IMR-90 (cell line): ENCODE measurements at regions of chr22 and their contacts with region 1.

Region 1: DNA sequence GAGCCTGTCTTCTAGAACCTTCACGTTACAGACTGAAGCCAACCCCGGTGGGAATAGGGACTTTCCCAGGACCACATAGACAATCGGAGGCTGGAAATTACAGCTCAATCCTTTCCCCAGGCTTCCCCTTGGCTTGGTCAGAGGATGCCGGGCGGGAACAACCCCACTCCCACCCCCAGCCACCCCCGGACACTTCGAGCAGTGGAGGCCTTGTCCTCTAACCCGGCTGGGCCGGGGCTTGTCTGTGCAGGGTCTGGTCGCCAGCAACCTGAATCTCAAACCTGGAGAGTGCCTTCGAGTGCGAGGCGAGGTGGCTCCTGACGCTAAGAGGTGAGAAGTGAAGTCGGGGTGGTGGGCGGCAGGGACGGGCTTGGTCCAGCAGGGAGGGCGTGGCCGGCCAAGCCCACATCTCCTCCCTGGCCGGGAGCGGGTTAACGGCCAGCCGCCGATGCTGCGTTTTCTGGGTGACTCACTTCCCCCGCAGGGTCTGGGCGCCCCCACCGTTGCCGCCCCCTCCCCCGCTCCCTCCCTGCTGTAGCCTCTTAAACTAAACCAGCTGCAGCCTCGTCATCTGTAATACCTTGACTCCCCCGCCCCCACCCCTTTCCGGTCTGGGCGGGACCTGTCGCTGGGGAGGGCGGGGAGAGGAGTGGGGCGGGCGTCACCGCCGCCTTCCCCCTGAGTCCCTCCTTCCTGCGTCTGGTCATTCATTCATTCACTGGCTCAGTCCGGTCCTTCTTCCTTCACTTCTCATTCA is 1.5 kb downstream of the LGALS1 start:
- DNase-seq: peak; percentile 98
- ATAC-seq: peak; percentile 56
- H3K4me3 ChIP-seq: peak overlapping the region; percentile 92
- H3K27ac ChIP-seq: peak overlapping the region; percentile 98
- H3K4me1 ChIP-seq: peaks cover 20% of the 10 kb centered on the region
- H3K27me3 ChIP-seq: no peaks in the 10 kb centered on the region
- CTCF ChIP-seq: no peak
- POLR2A ChIP-seq: peak; percentile 90
- RAD21 ChIP-seq: no peak

Region 2: GRCh38 chr22:37544955-37545699 is 131.8 kb before region 1 on chr22:
- CTCF ChIA-PET with region 1: no interaction called
- POLR2A ChIA-PET with region 1: no interaction called
- dilution Hi-C with region 1: no loop called
- in situ Hi-C with region 1: no loop called
- intact Hi-C with region 1: loop called (anchors 5 kb)
- DNase-seq: peak; percentile 58
- ATAC-seq: peak; percentile 40
- H3K4me3 ChIP-seq: no peak overlapping the region
- H3K27ac ChIP-seq: peak overlapping the region; percentile 89
- H3K4me1 ChIP-seq: peaks cover 30% of the 10 kb centered on the region
- H3K27me3 ChIP-seq: no peaks in the 10 kb centered on the region
- CTCF ChIP-seq: peak; percentile 88
- POLR2A ChIP-seq: no peak
- RAD21 ChIP-seq: peak; percentile 83

Region 3: GRCh38 chr22:37623075-37624016 is 53.6 kb before region 1 on chr22:
- CTCF ChIA-PET with region 1: no interaction called
- POLR2A ChIA-PET with region 1: no interaction called
- dilution Hi-C with region 1: no loop called
- in situ Hi-C with region 1: no loop called
- intact Hi-C with region 1: loop called (anchors 1 kb)
- DNase-seq: peak; percentile 43
- ATAC-seq: peak; percentile 94
- H3K4me3 ChIP-seq: no peak overlapping the region
- H3K27ac ChIP-seq: peak overlapping the region; percentile 9; the same call in 1 of the 2 replicates
- H3K4me1 ChIP-seq: peaks cover 3% of the 10 kb centered on the region; the same call in 1 of the 2 replicates
- H3K27me3 ChIP-seq: no peaks in the 10 kb centered on the region
- CTCF ChIP-seq: peak; percentile 70
- POLR2A ChIP-seq: no peak
- RAD21 ChIP-seq: peak; percentile 65

Region 4: DNA sequence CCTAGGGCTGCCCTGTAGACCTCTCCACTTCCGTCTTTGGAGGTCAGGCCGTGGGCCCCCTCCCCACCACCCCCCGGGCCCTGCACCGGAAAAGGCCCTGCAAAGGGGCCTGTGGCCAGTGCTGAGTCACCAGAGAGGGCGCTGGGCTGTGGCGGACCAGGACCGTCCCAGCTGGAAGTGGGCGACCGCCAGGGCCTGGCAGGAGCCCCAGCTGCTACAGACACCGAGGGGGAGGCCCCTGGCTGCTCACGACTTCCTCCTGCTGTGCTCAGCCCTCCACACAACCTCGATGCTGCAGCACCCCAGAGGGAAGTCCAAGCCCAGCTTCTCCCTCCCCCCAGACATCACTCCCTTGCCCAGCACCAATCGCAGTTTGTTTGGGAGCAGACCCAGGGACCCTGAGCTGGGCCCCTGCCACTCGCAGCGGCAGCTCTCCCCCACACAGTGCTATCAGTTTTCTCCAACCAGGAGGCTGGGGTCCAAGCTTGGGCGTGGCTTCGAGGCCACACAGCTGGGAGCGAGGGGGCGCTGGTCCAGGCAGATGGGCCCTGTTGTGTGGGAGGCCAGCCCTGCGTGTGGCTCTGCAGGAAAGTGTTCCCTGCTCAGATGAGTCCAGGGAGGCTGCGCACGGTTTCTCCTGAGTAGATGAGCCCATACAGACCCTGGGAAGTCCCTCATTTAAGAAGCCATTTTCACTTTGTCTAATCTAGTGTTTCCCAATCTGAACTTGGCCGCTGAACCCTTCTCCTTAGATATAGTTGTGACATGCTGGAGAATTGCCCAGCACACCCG is 43.1 kb before region 1 on chr22:
- CTCF ChIA-PET with region 1: interaction called, 12 read pairs
- POLR2A ChIA-PET with region 1: interaction called, 4 read pairs
- dilution Hi-C with region 1: no loop called
- in situ Hi-C with region 1: no loop called
- intact Hi-C with region 1: no loop called
- DNase-seq: peak; percentile 92
- ATAC-seq: peak; percentile 81
- H3K4me3 ChIP-seq: no peak overlapping the region
- H3K27ac ChIP-seq: peak overlapping the region; percentile 97
- H3K4me1 ChIP-seq: peaks cover 37% of the 10 kb centered on the region
- H3K27me3 ChIP-seq: no peaks in the 10 kb centered on the region
- CTCF ChIP-seq: peak; percentile 28
- POLR2A ChIP-seq: no peak; the same call in 1 of the 2 replicates
- RAD21 ChIP-seq: no peak

Region 5: GRCh38 chr22:37643225-37643847 is 33.6 kb before region 1 on chr22:
- CTCF ChIA-PET with region 1: interaction called, 24 read pairs
- POLR2A ChIA-PET with region 1: interaction called, 15 read pairs
- dilution Hi-C with region 1: no loop called
- in situ Hi-C with region 1: loop called (anchors 5 kb)
- intact Hi-C with region 1: loop called (anchors 1 kb)
- DNase-seq: peak; percentile 57
- ATAC-seq: peak; percentile 92
- H3K4me3 ChIP-seq: no peak overlapping the region
- H3K27ac ChIP-seq: no peak overlapping the region
- H3K4me1 ChIP-seq: peaks cover 15% of the 10 kb centered on the region
- H3K27me3 ChIP-seq: no peaks in the 10 kb centered on the region
- CTCF ChIP-seq: peak; percentile 82
- POLR2A ChIP-seq: no peak
- RAD21 ChIP-seq: peak; percentile 82

Region 6: DNA sequence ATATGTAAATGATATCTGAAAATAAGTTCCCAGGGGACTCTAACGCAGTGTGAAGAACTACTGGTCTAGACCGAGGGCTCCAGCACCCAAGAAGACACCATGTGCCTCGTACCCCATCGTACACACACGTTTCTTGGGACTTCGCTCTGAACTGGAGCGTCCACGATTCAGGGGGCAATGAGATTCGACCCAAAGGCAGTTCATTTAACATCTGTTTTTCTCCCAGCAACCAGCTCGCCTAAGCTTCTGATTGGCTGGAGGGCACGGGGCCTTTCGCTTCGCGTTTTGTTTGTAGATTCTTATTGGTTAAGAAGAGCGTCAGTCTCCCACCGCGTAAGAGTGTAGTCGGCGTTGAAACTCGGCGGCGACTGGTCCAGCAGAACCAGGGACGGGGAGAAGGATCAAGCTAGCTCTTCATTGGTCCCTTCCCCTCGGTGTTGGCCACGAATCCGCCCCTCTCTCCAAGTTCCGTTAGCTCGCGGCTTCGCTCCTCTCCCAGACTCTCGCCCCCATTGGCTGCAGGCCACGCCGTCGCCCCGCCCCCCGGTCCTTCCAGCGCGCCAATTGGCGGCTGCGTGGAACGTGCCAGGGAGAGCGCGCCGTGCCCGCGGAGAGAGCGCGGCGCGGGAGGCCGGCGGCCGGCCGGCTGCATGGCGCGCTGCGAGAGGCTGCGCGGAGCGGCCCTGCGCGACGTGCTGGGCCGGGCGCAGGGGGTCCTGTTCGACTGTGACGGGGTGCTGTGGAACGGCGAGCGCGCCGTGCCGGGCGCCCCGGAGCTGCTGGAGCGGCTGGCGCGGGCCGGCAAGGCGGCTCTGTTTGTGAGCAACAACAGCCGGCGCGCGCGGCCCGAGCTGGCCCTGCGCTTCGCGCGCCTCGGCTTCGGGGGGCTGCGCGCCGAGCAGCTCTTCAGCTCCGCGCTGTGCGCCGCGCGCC is 18.5 kb before region 1 on chr22 and contains the start of gene PDXP:
- CTCF ChIA-PET with region 1: interaction called, 15 read pairs
- POLR2A ChIA-PET with region 1: interaction called, 17 read pairs
- dilution Hi-C with region 1: no loop called
- in situ Hi-C with region 1: no loop called
- intact Hi-C with region 1: loop called (anchors 1 kb)
- DNase-seq: peak; percentile 100
- ATAC-seq: peak; percentile 95
- H3K4me3 ChIP-seq: peak within 1 kb of the TSS; percentile 55
- H3K27ac ChIP-seq: peak within 1 kb of the TSS; percentile 74
- H3K4me1 ChIP-seq: peaks cover 22% of the 10 kb centered on the region
- H3K27me3 ChIP-seq: no peaks in the 10 kb centered on the region
- CTCF ChIP-seq: no peak
- POLR2A ChIP-seq: peak; percentile 48; the same call in 1 of the 2 replicates
- RAD21 ChIP-seq: no peak; the same call in 1 of the 2 replicates
- total RNA-seq, gene PDXP: 5.4 and 5.6 TPM in 2 replicates

Region 7: DNA sequence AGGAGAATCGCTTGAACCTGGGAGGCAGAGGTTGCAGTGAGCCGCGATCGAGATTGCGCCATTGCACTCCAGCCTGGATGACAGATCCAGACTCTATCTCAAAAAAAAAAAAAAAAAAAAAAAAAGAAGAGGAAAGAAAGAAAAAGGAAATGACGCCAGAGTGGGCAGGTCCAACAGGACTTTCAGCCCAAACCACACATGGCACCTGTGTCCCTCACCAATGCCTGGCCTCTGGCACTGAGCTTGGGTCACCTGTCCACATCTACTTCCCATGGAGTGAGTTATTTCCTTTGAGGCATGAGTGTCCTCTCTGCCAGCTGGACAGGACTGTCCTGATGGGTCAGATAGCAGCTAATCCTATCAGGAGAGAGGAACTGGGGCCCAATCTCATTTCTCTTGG is 115.6 kb after region 1 on chr22:
- CTCF ChIA-PET with region 1: no interaction called
- POLR2A ChIA-PET with region 1: interaction called, 3 read pairs
- dilution Hi-C with region 1: no loop called
- in situ Hi-C with region 1: no loop called
- intact Hi-C with region 1: loop called (anchors 5 kb)
- DNase-seq: no peak
- ATAC-seq: no peak
- H3K4me3 ChIP-seq: no peak overlapping the region
- H3K27ac ChIP-seq: no peak overlapping the region
- H3K4me1 ChIP-seq: no peaks in the 10 kb centered on the region
- H3K27me3 ChIP-seq: no peaks in the 10 kb centered on the region
- CTCF ChIP-seq: no peak
- POLR2A ChIP-seq: no peak
- RAD21 ChIP-seq: no peak